Sciatic nerve (tissue), 2 donors: ENCODE measurements at regions of chr9 and their contacts with region 1.

Region 1: GRCh38 chr9:22392523-22392922 is 54.1 kb upstream of the DMRTA1 start:
- DNase-seq: no peak
- ATAC-seq: no peak

Region 2: DNA sequence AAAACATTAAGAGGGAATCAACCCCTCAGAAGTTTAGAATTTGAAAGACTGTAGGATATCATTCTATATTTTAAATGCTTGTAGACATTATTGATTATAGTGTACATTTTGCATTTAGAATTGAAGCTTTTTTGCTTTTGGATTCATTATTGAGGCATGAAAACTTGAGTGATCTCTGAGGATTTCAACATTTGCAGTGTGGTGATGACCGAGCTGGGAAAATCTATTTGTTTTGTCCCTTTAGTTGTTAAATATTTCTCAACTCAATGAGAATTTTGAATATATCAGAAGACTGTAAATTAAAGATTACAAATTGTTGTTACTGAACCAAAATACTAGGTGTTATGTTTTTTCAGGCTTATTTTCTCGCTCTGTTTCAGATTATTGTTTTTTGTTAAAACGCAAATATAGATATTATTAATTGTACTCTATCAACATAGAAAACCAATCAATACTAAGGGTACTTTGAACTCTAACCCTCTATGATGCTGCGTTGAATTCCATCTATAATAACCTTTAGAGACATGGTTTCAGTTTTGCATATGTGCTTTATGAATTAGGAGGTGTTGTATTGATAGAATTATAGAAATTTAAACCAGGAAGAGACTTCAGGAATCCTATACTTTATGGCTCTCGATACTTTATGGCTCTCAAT is 34.8 kb after region 1 on chr9:
- intact Hi-C with region 1: loop called (anchors 1 kb)
- DNase-seq: no peak
- ATAC-seq: no peak

Region 3: DNA sequence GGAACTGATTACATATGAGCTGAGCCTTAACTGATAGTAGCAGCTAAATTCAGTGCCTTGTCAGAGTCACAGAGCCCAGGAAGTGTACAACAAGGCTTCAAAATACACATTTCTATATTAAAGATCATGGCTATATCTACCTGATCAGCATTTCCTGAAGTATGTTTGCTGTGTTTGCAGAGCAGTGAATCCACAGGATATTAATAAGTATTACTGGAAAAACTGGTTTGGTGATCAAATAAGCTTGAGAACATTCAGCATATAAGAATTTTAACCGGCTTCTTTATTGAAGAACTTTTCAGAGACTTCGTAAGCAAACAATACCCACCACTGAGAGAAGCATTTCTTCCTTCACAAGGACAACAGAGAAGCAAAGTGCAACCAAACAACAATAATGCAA is 1206.5 kb after region 1 on chr9:
- intact Hi-C with region 1: no loop called
- DNase-seq: no peak
- ATAC-seq: no peak